Calu3 (cell line): ENCODE measurements at regions of chr4 and their contacts with region 1.

Region 1: GRCh38 chr4:122602277-122603142 is 18.4 kb downstream of the IL21 start:
- DNase-seq: no peak
- H3K4me3 Mint-ChIP-seq: peak overlapping the region; percentile 41
- H3K27ac Mint-ChIP-seq: no peak overlapping the region
- H3K4me1 Mint-ChIP-seq: no peaks in the 10 kb centered on the region
- H3K27me3 Mint-ChIP-seq: peaks cover 13% of the 10 kb centered on the region
- CTCF ChIP-seq: no peak

Region 2: DNA sequence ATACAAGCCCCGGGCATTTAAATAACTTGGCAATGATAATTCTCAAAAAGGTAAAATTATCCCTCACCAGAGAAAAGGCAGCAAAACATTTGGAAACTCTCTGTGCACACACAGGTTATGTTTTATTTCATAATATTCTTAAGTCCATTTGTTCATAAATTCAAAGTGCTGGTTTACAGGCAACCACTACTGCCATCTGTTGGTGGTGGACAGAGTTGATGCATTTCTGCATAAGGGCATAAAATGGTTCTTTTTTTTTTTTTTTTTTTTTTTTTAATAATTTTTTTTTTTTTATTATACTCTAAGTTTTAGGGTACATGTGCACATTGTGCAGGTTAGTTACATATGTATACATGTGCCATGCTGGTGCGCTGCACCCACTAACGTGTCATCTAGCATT is 49.9 kb after region 1 on chr4:
- CTCF ChIA-PET with region 1: no interaction called
- intact Hi-C with region 1: loop called (anchors 5 kb)
- DNase-seq: peak; percentile 41
- H3K4me3 Mint-ChIP-seq: no peak overlapping the region
- H3K27ac Mint-ChIP-seq: no peak overlapping the region
- H3K4me1 Mint-ChIP-seq: no peaks in the 10 kb centered on the region
- H3K27me3 Mint-ChIP-seq: no peaks in the 10 kb centered on the region
- CTCF ChIP-seq: peak; percentile 13

Region 3: GRCh38 chr4:122716825-122717448 is 114.4 kb after region 1 on chr4:
- CTCF ChIA-PET with region 1: interaction called, 7 read pairs
- intact Hi-C with region 1: loop called (anchors 1 kb)
- DNase-seq: peak; percentile 72
- H3K4me3 Mint-ChIP-seq: no peak overlapping the region
- H3K27ac Mint-ChIP-seq: no peak overlapping the region
- H3K4me1 Mint-ChIP-seq: no peaks in the 10 kb centered on the region
- H3K27me3 Mint-ChIP-seq: no peaks in the 10 kb centered on the region
- CTCF ChIP-seq: peak; percentile 34

Region 4: GRCh38 chr4:122930862-122931261 is 328.4 kb after region 1 on chr4:
- CTCF ChIA-PET with region 1: no interaction called
- intact Hi-C with region 1: loop called (anchors 1 kb)
- DNase-seq: no peak
- H3K4me3 Mint-ChIP-seq: no peak overlapping the region
- H3K27ac Mint-ChIP-seq: no peak overlapping the region
- H3K4me1 Mint-ChIP-seq: no peaks in the 10 kb centered on the region
- H3K27me3 Mint-ChIP-seq: no peaks in the 10 kb centered on the region
- CTCF ChIP-seq: no peak